Esophagus muscularis mucosa (tissue), 4 donors: ENCODE measurements at regions of chrX and their contacts with region 1.

Region 1: DNA sequence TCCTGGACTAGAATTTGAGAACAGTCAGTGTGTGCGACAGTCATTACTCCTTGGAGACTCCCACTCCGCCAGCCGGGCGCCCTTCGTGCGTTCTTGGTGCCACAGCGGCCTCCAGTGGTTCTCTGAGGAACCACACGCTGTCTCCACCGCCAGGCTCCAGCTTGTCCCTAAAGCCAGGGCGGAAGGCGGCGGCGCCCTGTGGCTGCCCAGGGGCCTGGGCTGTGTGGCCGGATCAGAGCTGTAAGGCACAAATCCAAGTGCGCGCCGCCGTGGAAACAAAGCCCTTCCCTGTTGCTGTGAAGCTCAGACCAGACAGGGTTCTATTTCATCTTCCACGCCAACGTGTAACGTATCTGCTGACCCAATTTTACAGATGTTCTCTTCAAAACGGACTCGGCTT is 34.2 kb downstream of the IDS start:
- DNase-seq: no peak
- H3K4me3 ChIP-seq: peak overlapping the region in 1 of 4 donors; percentile 6
- H3K27ac ChIP-seq: no peak overlapping the region
- H3K4me1 ChIP-seq: peaks cover 0 to 8% (median 3%) of the 10 kb centered on the region in 4 donors
- H3K27me3 ChIP-seq: no peaks in the 10 kb centered on the region
- CTCF ChIP-seq: peak; percentile 73 to 86 (median 85)
- EP300 ChIP-seq: no peak
- POLR2A ChIP-seq: no peak

Region 2: GRCh38 chrX:148049441-148049840 is 1421.5 kb before region 1 on chrX:
- intact Hi-C with region 1: loop called (anchors 5 kb)
- DNase-seq: no peak
- H3K4me3 ChIP-seq: no peak overlapping the region
- H3K27ac ChIP-seq: no peak overlapping the region
- H3K4me1 ChIP-seq: no peaks in the 10 kb centered on the region
- H3K27me3 ChIP-seq: no peaks in the 10 kb centered on the region
- CTCF ChIP-seq: peak; percentile 22 to 46 (median 37)
- EP300 ChIP-seq: no peak
- POLR2A ChIP-seq: no peak

Region 3: GRCh38 chrX:149563359-149563758 is 92.4 kb after region 1 on chrX:
- intact Hi-C with region 1: no loop called
- DNase-seq: no peak
- H3K4me3 ChIP-seq: no peak overlapping the region
- H3K27ac ChIP-seq: no peak overlapping the region
- H3K4me1 ChIP-seq: no peaks in the 10 kb centered on the region
- H3K27me3 ChIP-seq: no peaks in the 10 kb centered on the region
- CTCF ChIP-seq: no peak
- EP300 ChIP-seq: no peak
- POLR2A ChIP-seq: no peak